Heart right ventricle (tissue), 16 donors: ENCODE measurements at regions of chr5 and their contacts with region 1.

Region 1: GRCh38 chr5:149268928-149269557 is 2.6 kb upstream of the AFAP1L1 start:
- DNase-seq: no peak
- ATAC-seq: no peak
- H3K4me3 ChIP-seq: no peak overlapping the region
- H3K27ac ChIP-seq: peak overlapping the region in 4 of 10 donors; percentile 2 to 97 (median 36)
- H3K4me1 ChIP-seq: peaks cover 0 to 62% (median 23%) of the 10 kb centered on the region in 9 donors
- H3K27me3 ChIP-seq: peaks cover 0 to 39% (median 0%) of the 10 kb centered on the region in 7 donors
- CTCF ChIP-seq: peak; percentile 65 to 83 (median 77)

Region 2: GRCh38 chr5:148632255-148633066 is 636.6 kb before region 1 on chr5:
- intact Hi-C with region 1: no loop called
- DNase-seq: no peak
- ATAC-seq: no peak
- H3K4me3 ChIP-seq: no peak overlapping the region
- H3K27ac ChIP-seq: no peak overlapping the region
- H3K4me1 ChIP-seq: no peaks in the 10 kb centered on the region
- H3K27me3 ChIP-seq: no peaks in the 10 kb centered on the region
- CTCF ChIP-seq: no peak

Region 3: DNA sequence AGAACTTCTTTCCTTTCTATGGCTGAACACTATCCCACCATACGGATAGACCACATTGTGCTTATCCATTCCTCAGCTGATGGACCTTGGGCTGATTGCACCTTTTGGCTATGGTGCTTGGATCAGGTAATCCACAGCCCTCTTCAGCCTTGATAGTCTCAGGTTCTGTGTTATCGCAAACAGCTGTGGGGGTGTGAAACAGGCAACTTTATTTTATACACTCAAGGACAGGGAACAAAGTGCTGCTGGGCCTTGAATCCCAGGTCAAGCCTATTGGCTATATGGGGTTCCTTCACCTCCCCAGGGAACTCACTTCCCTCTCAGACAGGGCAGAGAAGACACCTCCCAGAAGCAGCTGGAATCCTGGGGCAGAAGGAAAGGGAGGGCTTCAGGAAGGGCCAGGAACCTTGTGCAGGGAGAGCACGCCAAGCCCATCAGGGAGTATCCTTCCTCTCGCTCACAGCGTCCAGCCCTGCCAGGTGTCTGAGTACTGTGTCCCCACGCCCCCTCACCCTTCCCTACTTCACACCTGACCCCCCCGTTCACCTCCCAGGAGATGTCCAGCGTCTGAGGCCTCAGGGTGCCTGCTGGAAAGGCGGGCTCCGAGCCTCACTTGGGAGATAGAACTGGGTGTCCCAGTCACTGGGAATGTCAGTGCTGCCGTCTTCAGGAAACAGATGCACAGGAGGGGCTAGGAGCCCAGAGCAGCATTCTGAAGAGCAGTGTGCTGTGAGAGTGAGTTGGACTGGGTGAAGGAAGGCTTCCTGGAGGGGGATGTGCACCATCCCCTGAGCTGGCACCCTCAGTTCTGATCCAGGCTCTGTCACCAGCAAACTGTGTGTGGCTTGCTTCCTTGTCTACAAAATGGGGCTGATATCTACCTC is 35.4 kb after region 1 on chr5:
- intact Hi-C with region 1: loop called in 1 of 10 experiments (anchors 5 kb)
- DNase-seq: peak in 1 of 2 donors; percentile 65
- ATAC-seq: peak; percentile 42 to 82 (median 66)
- H3K4me3 ChIP-seq: no peak overlapping the region
- H3K27ac ChIP-seq: peak overlapping the region in 9 of 10 donors; percentile 26 to 97 (median 64)
- H3K4me1 ChIP-seq: peaks cover 5 to 66% (median 35%) of the 10 kb centered on the region in 9 donors
- H3K27me3 ChIP-seq: peaks cover 0 to 3% (median 0%) of the 10 kb centered on the region in 7 donors
- CTCF ChIP-seq: no peak

Region 4: DNA sequence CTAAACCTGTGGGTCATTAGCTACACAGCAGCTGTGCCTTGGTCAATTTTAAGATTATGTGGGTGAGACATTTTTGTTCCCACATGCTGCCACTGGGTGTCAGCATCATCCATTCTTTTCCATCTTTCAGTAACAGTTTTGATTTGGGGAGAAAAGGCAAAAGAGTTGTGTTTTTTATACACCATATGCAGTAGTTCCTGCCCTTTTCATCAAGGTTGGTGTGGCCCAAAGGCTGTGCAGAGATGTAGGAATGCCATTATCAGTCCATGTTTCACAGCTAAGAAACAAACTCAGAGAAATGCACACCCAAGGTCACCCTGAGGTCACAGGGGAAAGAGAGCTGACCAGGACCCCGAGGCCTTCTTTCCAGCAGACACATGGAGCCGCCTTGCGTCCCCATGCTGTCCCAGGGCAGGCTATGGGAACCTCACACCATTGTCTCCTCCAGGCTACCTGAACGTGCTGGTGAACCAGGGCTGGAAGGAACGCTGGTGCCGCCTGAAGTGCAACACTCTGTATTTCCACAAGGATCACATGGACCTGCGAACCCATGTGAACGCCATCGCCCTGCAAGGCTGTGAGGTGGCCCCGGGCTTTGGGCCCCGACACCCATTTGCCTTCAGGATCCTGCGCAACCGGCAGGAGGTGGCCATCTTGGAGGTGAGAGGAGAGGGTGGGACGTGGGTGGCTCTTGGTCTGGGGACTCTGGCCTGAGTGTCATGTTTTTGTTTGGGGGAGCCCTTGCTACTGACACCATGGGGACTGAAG is 48.4 kb after region 1 on chr5:
- intact Hi-C with region 1: loop called in 2 of 10 experiments (anchors 5 kb)
- DNase-seq: no peak
- ATAC-seq: no peak
- H3K4me3 ChIP-seq: no peak overlapping the region
- H3K27ac ChIP-seq: peak overlapping the region in 9 of 10 donors; percentile 3 to 89 (median 68)
- H3K4me1 ChIP-seq: peaks cover 0 to 58% (median 33%) of the 10 kb centered on the region in 9 donors
- H3K27me3 ChIP-seq: no peaks in the 10 kb centered on the region
- CTCF ChIP-seq: peak; percentile 29 to 73 (median 63)

Region 5: DNA sequence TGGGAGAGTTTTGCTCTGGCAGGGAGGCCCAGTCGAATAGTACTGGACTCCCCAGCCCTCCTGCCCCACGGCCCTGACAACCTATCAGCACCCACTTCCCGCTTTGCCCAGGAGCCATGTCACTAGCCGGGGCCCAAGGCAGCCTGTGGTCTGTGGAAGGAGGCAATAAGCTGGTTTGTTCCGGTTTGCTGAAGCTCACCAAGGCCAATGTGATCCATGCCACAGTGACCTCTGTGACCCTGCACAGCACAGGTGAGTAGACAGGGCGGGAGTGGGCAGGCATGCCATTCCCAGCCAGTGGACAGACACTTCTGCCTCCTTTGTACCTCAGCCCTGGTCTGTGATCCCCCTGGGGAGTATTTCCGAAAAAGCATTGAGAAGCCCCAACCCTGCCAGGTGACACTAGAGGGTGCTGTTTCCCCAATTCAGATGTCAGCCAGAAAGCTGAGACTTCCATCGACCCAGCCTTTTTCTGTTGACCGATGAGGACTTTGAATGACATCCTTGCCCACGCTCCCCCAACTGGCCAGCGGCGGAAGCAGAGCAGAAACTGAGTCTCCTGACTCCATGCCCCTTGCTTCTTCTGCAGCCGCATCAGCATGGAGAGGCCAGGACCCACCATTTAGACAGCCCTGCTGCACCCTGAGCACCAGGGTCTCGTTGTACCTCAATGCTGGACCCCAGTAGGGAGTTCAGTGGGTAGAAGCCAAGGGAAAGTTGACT is 98.4 kb after region 1 on chr5:
- intact Hi-C with region 1: loop called (anchors 1 to 10 kb)
- DNase-seq: peak; percentile 37 to 75
- ATAC-seq: peak; percentile 43 to 66 (median 57)
- H3K4me3 ChIP-seq: no peak overlapping the region
- H3K27ac ChIP-seq: no peak overlapping the region
- H3K4me1 ChIP-seq: peaks cover 0 to 35% (median 12%) of the 10 kb centered on the region in 9 donors
- H3K27me3 ChIP-seq: no peaks in the 10 kb centered on the region
- CTCF ChIP-seq: peak; percentile 61 to 86 (median 82)

Region 6: GRCh38 chr5:149561848-149562247 is 292.8 kb after region 1 on chr5:
- intact Hi-C with region 1: loop called in 3 of 10 experiments (anchors 5 to 10 kb)
- DNase-seq: peak in 1 of 2 donors; percentile 34
- ATAC-seq: peak; percentile 60 to 95 (median 90)
- H3K4me3 ChIP-seq: peak overlapping the region in 5 of 10 donors; percentile 5 to 24 (median 20)
- H3K27ac ChIP-seq: peak overlapping the region; percentile 5 to 94 (median 84)
- H3K4me1 ChIP-seq: peaks cover 6 to 47% (median 39%) of the 10 kb centered on the region in 9 donors
- H3K27me3 ChIP-seq: no peaks in the 10 kb centered on the region
- CTCF ChIP-seq: no peak